ENCODE measurements at regions of chr17 and their contacts with region 1.

Region 1: DNA sequence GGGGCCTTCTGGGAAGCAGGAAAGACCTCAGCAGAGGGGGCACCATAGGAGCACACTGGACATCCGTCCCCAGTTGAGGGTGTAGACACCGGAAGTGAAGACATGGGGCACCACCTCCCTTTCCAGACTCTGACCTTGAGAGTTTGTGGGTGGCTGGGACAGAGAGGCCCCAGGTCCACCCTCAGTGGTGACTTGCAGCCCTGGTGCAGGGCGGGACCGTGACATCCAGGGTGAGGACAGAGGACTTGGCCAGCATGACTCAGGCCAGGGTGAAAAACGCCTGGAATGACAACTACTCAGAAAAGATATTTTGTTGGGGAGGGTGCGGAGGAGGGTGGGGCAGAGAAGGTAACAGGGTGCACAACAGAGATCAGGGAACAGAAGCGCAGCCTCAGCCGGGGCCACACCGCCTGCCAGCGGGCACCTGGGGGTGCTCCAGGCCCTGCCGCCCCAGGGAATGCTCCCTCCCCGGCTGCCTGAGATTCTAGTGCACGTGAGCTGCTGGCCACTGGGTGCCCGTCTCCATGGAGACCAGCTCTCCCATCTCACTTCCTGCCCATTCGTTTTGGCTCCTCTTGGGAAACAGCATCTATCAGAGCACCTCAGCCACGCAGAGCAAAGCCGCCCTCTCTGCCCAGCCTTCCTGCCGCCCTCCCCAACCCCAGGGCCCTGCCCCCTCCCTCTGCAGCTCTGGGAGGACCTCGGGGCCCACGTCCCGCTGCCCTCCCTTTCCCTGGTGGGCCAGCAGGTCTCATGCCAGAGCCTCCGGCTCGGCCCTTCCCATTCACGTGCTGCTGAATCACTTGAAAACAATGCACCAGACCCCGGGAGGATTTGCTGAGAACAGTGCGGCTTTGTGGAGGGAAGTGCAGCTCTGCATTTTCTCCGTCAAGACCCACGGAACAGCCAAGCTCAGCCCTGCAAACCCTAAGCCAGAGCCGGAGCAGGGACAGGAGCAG is 19.6 kb downstream of the CEP295NL start:
- DNase-seq: peak; percentile 80
- H3K4me3 ChIP-seq: peak overlapping the region in 2 of 3 experiments; percentile 12 to 24
- H3K27ac ChIP-seq: peak overlapping the region; percentile 73
- H3K4me1 ChIP-seq: peaks cover 26% of the 10 kb centered on the region
- H3K27me3 ChIP-seq: no peaks in the 10 kb centered on the region
- CTCF ChIP-seq: peak in 1 of 2 donors; percentile 14

Region 2: DNA sequence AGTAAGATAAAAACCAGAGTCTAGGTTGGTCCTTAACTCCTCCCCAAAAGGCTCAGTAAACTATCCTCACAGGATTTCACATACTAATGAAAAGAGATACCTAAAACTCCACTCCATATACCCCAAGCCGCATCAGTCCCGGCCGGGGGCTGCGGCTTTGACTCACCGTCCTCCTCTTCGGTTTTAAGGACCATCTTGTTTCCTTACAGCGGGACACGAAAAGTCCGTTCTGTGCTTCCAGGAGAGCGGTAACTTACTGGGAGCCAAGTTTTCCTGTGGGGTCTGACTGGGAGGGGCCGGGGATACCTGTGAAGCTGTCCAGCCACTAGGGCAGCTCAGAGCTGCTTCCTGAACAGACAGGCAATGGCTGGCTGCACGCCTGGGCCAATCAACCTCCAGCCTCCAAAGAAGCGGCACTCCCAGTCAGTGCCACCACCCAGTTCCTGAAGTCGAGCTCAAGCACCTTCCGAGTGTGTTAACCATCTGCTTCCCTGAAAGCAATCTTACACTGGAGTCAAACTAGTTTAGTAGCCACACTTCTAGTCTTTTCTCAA is 146.8 kb before region 1 on chr17:
- CTCF ChIA-PET with region 1: no interaction called
- dilution Hi-C with region 1: no loop called
- in situ Hi-C with region 1: no loop called
- intact Hi-C with region 1: no loop called
- DNase-seq: peak; percentile 93
- H3K4me3 ChIP-seq: peak overlapping the region; percentile 56 to 76 (median 56)
- H3K27ac ChIP-seq: peak overlapping the region; percentile 91
- H3K4me1 ChIP-seq: peaks cover 25% of the 10 kb centered on the region
- H3K27me3 ChIP-seq: no peaks in the 10 kb centered on the region
- CTCF ChIP-seq: peak in 1 of 2 donors; percentile 41

Region 3: GRCh38 chr17:78933959-78934568 is 50.6 kb after region 1 on chr17:
- CTCF ChIA-PET with region 1: no interaction called
- dilution Hi-C with region 1: no loop called
- in situ Hi-C with region 1: no loop called
- intact Hi-C with region 1: loop called (anchors 1 kb)
- DNase-seq: peak; percentile 90
- H3K4me3 ChIP-seq: no peak overlapping the region
- H3K27ac ChIP-seq: peak overlapping the region; percentile 36
- H3K4me1 ChIP-seq: peaks cover 25% of the 10 kb centered on the region
- H3K27me3 ChIP-seq: no peaks in the 10 kb centered on the region
- CTCF ChIP-seq: no peak

Region 4: DNA sequence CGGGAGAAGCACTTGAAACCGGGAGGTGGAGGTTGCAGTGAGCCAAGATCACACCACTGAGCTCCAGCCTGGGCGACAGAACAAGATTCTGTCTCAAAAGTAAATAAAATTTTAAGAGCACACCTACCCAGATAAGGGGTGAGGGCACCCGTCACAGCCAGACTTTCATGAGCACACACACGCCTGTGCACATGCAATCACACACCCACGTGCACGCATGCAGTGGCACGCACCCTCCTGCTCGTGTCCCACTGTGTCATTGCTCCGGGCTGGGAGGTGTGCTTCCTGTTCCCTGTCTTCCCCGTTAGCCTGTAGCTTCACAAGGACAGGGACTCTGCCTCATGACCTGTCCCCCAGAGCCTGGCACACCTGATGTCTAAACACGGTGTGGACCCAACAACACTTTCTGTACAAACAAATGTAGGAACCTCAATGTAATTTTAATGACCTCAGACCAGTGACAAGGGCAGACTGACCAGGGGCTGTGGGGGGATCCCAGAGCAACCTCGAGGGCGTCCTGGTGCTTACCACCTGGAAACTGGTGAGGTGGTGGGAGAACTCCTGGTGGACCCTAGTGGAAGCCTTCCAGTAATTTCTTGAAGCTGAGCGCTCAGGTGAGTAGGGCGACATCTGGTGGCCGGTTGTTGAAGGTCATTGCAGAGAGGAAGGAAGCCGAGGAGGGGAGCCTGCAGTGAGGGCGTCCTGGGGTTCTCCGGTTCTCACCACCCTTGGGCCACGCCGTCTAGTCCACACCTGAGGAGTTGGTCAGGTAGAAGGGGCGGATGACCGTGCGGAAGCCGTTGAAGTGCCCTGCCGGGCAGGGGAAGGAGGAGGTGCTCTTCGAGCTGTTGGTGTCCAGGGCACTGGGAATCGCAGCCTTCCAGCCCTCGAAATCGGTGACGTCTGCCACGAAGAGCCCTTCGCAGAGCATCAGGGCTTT is 87.7 kb after region 1 on chr17:
- CTCF ChIA-PET with region 1: no interaction called
- dilution Hi-C with region 1: no loop called
- in situ Hi-C with region 1: no loop called
- intact Hi-C with region 1: loop called (anchors 1 kb)
- DNase-seq: peak; percentile 47
- H3K4me3 ChIP-seq: no peak overlapping the region
- H3K27ac ChIP-seq: no peak overlapping the region
- H3K4me1 ChIP-seq: peaks cover 32% of the 10 kb centered on the region
- H3K27me3 ChIP-seq: no peaks in the 10 kb centered on the region
- CTCF ChIP-seq: peak; percentile 84 to 88